ENCODE measurements at regions of chr9 and their contacts with region 1.

Region 1: DNA sequence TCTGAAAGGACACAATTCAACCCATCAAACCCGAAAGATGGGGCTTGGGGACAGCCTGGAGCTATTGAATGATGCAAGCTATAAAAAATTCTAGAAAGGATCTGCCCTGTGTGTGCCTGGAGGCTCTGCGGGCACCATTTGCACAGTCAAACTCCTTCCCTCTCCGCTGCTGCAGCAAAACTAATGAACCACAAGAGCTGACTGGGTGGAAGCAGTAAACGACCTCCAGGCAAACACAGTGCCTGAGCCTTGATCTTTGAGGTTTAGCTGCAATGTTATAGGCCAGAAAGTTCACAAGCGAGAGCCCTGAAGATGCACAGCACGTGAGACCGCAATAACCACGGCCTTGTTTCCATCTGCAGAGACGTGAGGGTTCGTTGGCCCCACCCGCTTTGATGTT is 69.2 kb upstream of the S1PR3 start:
- DNase-seq: peak; percentile 50 to 59 (median 57)
- H3K4me3 ChIP-seq: no peak overlapping the region
- H3K4me3 Mint-ChIP-seq: peak overlapping the region; percentile 25 to 83 (median 56)
- H3K27ac ChIP-seq: no peak overlapping the region
- H3K27ac Mint-ChIP-seq: peak overlapping the region in 6 of 7 donors; percentile 15 to 43 (median 32)
- H3K4me1 ChIP-seq: peaks cover 37% of the 10 kb centered on the region
- H3K4me1 Mint-ChIP-seq: peaks cover 39 to 49% (median 43%) of the 10 kb centered on the region in 4 donors
- H3K27me3 ChIP-seq: no peaks in the 10 kb centered on the region
- H3K27me3 Mint-ChIP-seq: peaks cover 0 to 1% of the 10 kb centered on the region in 2 donors

Region 2: DNA sequence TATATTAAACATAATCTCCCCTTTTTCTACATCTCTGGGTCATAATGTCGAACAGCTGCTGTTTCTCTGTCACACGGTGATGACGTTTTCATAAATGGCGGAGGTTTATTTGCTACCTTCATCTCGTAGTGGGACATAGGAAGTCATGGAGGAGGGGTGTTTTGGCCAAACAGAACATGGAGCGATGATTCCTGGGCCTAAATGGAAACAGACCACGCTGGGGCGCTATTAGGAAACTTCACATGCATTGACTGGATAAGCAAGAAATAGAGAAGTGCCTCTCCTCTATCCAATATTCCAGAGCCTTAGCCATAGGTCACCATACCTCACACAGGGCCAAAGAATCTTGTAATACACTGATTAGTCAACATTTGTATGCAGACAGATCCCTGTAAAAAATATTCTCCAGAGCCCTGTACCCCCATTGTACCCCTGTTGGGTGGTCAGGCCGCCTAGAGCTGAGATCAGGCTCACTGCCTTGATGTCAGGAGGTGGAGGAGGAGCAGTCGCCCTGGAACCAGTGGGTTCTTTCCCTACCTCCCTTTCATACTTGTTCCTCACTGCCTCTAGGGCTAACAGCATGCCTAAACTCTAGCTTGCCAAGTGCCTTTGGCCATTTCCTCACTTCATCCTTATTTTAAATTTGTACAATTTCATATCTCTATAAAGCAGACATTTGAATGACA is 611.6 kb before region 1 on chr9:
- CTCF ChIA-PET with region 1: no interaction called
- POLR2A ChIA-PET with region 1: no interaction called
- intact Hi-C with region 1: no loop called
- DNase-seq: no peak
- H3K4me3 ChIP-seq: no peak overlapping the region
- H3K4me3 Mint-ChIP-seq: no peak overlapping the region
- H3K27ac ChIP-seq: no peak overlapping the region
- H3K27ac Mint-ChIP-seq: no peak overlapping the region
- H3K4me1 ChIP-seq: peaks cover 27% of the 10 kb centered on the region
- H3K4me1 Mint-ChIP-seq: peaks cover 17 to 26% (median 21%) of the 10 kb centered on the region in 4 donors
- H3K27me3 ChIP-seq: no peaks in the 10 kb centered on the region
- H3K27me3 Mint-ChIP-seq: peaks cover 0 to 3% of the 10 kb centered on the region in 2 donors

Region 3: GRCh38 chr9:88835038-88835466 is 87.0 kb before region 1 on chr9:
- CTCF ChIA-PET with region 1: interaction called, 3 read pairs
- POLR2A ChIA-PET with region 1: no interaction called
- intact Hi-C with region 1: loop called (anchors 2 kb)
- DNase-seq: peak in 4 of 5 donors; percentile 50 to 61 (median 56)
- H3K4me3 ChIP-seq: no peak overlapping the region
- H3K4me3 Mint-ChIP-seq: peak overlapping the region in 5 of 8 donors; percentile 1 to 66 (median 32)
- H3K27ac ChIP-seq: no peak overlapping the region
- H3K27ac Mint-ChIP-seq: peak overlapping the region in 6 of 7 donors; percentile 1 to 87 (median 21)
- H3K4me1 ChIP-seq: peaks cover 23% of the 10 kb centered on the region
- H3K4me1 Mint-ChIP-seq: peaks cover 9 to 30% (median 15%) of the 10 kb centered on the region in 4 donors
- H3K27me3 ChIP-seq: peaks cover 17% of the 10 kb centered on the region
- H3K27me3 Mint-ChIP-seq: peaks cover 24 to 33% of the 10 kb centered on the region in 2 donors

Region 4: GRCh38 chr9:88988796-88989560 is 66.9 kb after region 1 on chr9:
- CTCF ChIA-PET with region 1: no interaction called
- POLR2A ChIA-PET with region 1: no interaction called
- intact Hi-C with region 1: loop called (anchors 10 kb)
- DNase-seq: no peak
- H3K4me3 ChIP-seq: no peak overlapping the region
- H3K4me3 Mint-ChIP-seq: peak overlapping the region in 6 of 8 donors; percentile 1 to 66 (median 51)
- H3K27ac ChIP-seq: no peak overlapping the region
- H3K27ac Mint-ChIP-seq: peak overlapping the region in 1 of 7 donors; percentile 12
- H3K4me1 ChIP-seq: peaks cover 16% of the 10 kb centered on the region
- H3K4me1 Mint-ChIP-seq: peaks cover 9 to 17% (median 14%) of the 10 kb centered on the region in 4 donors
- H3K27me3 ChIP-seq: no peaks in the 10 kb centered on the region
- H3K27me3 Mint-ChIP-seq: peaks cover 15 to 17% of the 10 kb centered on the region in 2 donors

Measured in CD4-positive, alpha-beta memory T cell (primary cell).